Cardiac septum (tissue), 1 donor: ENCODE measurements at regions of chr7 and their contacts with region 1.

Region 1: GRCh38 chr7:15720849-15721471 is 34.5 kb upstream of the MEOX2 start:
- DNase-seq: no peak

Region 2: GRCh38 chr7:15326044-15326644 is 394.8 kb before region 1 on chr7:
- intact Hi-C with region 1: loop called (anchors 10 kb)
- DNase-seq: no peak